ENCODE measurements at regions of chr9 and their contacts with region 1.

Region 1: DNA sequence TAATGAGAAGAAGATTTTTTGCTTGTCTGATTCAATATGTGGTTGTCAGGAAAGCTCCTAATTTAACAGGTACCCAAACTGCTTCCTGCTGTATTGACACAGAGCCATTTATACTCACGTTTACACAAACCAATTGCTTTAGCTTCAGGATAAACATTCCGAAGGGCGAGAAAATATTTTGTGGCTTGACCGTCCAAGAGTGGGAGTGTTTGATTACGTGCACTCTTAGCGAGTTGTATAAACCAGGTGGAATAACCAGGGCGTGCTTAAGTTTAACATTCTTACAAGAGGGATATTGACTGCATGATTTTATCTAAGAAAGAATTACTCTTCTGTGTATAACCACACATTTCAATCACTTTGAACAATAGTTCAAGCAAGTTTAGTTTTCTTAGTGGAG is 278.7 kb upstream of the TYRP1 start:
- DNase-seq: no peak
- ATAC-seq: no peak

Region 2: DNA sequence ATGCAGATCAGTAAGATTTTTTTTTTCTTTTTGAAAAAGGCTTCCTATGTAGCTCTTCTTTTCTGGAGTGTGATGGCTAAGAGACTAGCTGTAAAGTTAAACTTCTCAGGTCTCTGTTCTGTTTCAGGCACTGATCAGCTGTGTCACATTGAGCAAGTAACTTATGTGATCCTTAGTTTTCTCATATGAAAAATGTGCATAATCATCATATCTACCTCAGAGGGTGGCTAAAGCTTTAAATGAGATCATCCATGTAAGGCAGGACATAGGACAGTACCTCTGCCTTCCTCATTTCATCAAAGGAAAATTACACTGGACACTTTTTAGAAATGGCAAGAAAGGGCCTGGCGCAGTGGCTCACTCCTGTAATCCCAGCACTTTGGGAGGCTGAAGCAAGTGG is 42.7 kb after region 1 on chr9:
- intact Hi-C with region 1: loop called (anchors 2 kb)
- DNase-seq: no peak
- ATAC-seq: no peak

Region 3: DNA sequence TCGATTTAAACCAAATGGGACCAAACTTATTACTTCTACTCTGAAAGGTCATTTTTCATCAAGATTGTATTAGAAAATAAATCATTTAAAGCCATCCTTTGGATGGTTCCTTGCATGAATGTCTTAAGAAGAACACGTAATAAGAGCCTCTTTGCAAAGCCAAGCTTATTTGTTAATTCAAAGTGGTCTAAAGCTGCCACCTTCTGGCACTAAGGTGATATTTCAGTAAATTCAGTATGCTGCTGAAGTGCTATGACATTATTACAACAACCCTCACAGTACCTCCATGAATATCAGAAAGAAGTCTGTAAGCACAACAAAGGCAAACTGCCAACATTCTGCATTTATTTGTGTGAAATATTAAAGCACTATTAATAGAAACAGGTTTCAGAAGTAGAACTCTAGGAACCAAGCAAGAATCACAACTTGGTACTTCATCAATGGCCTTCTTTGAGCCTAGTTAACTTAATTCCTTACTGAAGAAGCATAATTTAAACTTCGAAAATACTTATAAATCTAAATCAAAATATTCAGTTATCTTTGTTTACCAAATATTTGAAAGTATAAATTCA is 225.6 kb after region 1 on chr9:
- intact Hi-C with region 1: no loop called
- DNase-seq: no peak
- ATAC-seq: peak; percentile 34

Measured in left ventricle myocardium superior (tissue), 1 donor.